T-cell (primary cell): ENCODE measurements at regions of chr3 and their contacts with region 1.

Region 1: GRCh38 chr3:77348231-77348855 is 308.4 kb downstream of the ROBO2 start:
- DNase-seq: no peak
- ATAC-seq: no peak
- H3K4me3 ChIP-seq: no peak overlapping the region
- H3K4me3 Mint-ChIP-seq: no peak overlapping the region
- H3K27ac ChIP-seq: no peak overlapping the region
- H3K27ac Mint-ChIP-seq: no peak overlapping the region
- H3K4me1 ChIP-seq: no peaks in the 10 kb centered on the region
- H3K4me1 Mint-ChIP-seq: no peaks in the 10 kb centered on the region
- H3K27me3 ChIP-seq: no peaks in the 10 kb centered on the region
- H3K27me3 Mint-ChIP-seq: no peaks in the 10 kb centered on the region

Region 2: DNA sequence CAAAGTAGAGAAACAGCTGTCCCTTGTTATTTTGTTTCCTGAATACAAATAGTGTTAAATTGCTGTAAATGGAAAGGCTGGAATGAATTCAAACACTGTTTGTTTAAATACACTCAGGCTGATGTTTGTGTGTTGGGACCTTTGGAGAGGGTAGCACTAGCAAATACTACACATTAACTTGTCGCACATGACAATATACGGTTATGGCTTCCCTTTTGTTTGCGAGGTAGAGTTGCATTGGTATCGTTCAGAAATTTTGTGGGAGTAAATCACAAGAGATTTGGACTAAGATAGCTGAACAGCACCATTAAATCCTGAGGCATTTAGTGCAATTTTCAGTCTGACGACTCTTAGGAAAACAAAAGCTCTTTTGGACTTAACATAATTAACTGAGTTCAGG is 521.5 kb before region 1 on chr3:
- CTCF ChIA-PET with region 1: no interaction called
- POLR2A ChIA-PET with region 1: no interaction called
- DNase-seq: no peak
- ATAC-seq: no peak
- H3K4me3 ChIP-seq: no peak overlapping the region
- H3K4me3 Mint-ChIP-seq: no peak overlapping the region
- H3K27ac ChIP-seq: no peak overlapping the region
- H3K27ac Mint-ChIP-seq: no peak overlapping the region
- H3K4me1 ChIP-seq: no peaks in the 10 kb centered on the region
- H3K4me1 Mint-ChIP-seq: no peaks in the 10 kb centered on the region
- H3K27me3 ChIP-seq: no peaks in the 10 kb centered on the region
- H3K27me3 Mint-ChIP-seq: no peaks in the 10 kb centered on the region

Region 3: DNA sequence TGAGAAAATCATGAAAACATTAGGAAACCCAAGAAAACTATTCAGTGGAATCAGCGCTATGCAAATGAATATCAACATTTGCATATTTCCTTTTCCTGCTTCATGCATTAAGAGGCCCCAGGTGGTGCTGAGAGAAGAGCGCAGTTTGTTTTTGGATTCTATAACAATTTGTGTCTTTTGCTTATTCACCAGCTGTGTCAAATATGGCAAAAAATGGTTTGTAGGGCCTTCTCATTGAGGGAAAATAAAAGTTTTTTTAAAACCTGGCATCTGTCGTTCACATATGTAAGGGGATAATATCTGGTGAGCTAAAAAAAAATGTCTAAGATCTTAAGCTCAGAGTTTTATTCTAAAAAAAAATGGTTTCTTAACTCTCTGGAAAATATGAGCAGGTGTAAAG is 430.9 kb before region 1 on chr3:
- CTCF ChIA-PET with region 1: no interaction called
- POLR2A ChIA-PET with region 1: no interaction called
- DNase-seq: no peak
- ATAC-seq: no peak
- H3K4me3 ChIP-seq: no peak overlapping the region
- H3K4me3 Mint-ChIP-seq: no peak overlapping the region
- H3K27ac ChIP-seq: no peak overlapping the region
- H3K27ac Mint-ChIP-seq: no peak overlapping the region
- H3K4me1 ChIP-seq: no peaks in the 10 kb centered on the region
- H3K4me1 Mint-ChIP-seq: no peaks in the 10 kb centered on the region
- H3K27me3 ChIP-seq: no peaks in the 10 kb centered on the region
- H3K27me3 Mint-ChIP-seq: no peaks in the 10 kb centered on the region

Region 4: GRCh38 chr3:77271711-77272110 is 76.6 kb before region 1 on chr3:
- CTCF ChIA-PET with region 1: no interaction called
- POLR2A ChIA-PET with region 1: no interaction called
- DNase-seq: no peak
- ATAC-seq: no peak
- H3K4me3 ChIP-seq: no peak overlapping the region
- H3K4me3 Mint-ChIP-seq: no peak overlapping the region
- H3K27ac ChIP-seq: no peak overlapping the region
- H3K27ac Mint-ChIP-seq: no peak overlapping the region
- H3K4me1 ChIP-seq: no peaks in the 10 kb centered on the region
- H3K4me1 Mint-ChIP-seq: no peaks in the 10 kb centered on the region
- H3K27me3 ChIP-seq: no peaks in the 10 kb centered on the region
- H3K27me3 Mint-ChIP-seq: no peaks in the 10 kb centered on the region

Region 5: GRCh38 chr3:77296527-77296926 is 51.8 kb before region 1 on chr3:
- CTCF ChIA-PET with region 1: no interaction called
- POLR2A ChIA-PET with region 1: interaction called in 1 of 2 experiments, 11 read pairs
- DNase-seq: no peak
- ATAC-seq: no peak
- H3K4me3 ChIP-seq: no peak overlapping the region
- H3K4me3 Mint-ChIP-seq: no peak overlapping the region
- H3K27ac ChIP-seq: no peak overlapping the region
- H3K27ac Mint-ChIP-seq: no peak overlapping the region
- H3K4me1 ChIP-seq: no peaks in the 10 kb centered on the region
- H3K4me1 Mint-ChIP-seq: no peaks in the 10 kb centered on the region
- H3K27me3 ChIP-seq: no peaks in the 10 kb centered on the region
- H3K27me3 Mint-ChIP-seq: no peaks in the 10 kb centered on the region

Region 6: GRCh38 chr3:77513542-77513941 is 165.2 kb after region 1 on chr3:
- CTCF ChIA-PET with region 1: no interaction called
- POLR2A ChIA-PET with region 1: no interaction called
- DNase-seq: no peak
- ATAC-seq: no peak
- H3K4me3 ChIP-seq: no peak overlapping the region
- H3K4me3 Mint-ChIP-seq: no peak overlapping the region
- H3K27ac ChIP-seq: no peak overlapping the region
- H3K27ac Mint-ChIP-seq: no peak overlapping the region
- H3K4me1 ChIP-seq: no peaks in the 10 kb centered on the region
- H3K4me1 Mint-ChIP-seq: no peaks in the 10 kb centered on the region
- H3K27me3 ChIP-seq: no peaks in the 10 kb centered on the region
- H3K27me3 Mint-ChIP-seq: no peaks in the 10 kb centered on the region